Esophagus muscularis mucosa (tissue), 4 donors: ENCODE measurements at regions of chr19 and their contacts with region 1.

Region 1: DNA sequence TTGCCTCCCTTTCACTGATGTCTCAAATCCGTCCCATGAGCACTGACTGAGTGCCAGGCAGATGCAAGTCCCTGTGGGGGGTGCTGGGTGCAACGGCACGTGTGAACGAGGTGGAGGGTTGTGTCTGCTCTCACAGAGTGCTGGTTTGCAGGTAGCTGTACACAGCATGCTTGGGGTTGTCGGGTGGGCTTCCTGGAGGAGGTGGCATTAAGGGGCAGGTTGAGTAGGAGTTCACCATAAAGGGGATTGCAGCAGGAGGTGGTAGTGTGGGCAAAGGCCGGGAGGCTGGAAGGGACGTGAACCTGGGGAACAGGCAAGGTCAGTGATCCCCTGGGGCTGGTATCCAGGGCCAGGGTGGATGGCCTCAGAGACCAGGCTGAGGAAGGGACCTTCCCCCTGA is 17.2 kb downstream of the COLGALT1 start:
- DNase-seq: no peak
- H3K4me3 ChIP-seq: no peak overlapping the region
- H3K27ac ChIP-seq: no peak overlapping the region
- H3K4me1 ChIP-seq: peaks cover 0 to 11% (median 3%) of the 10 kb centered on the region in 4 donors
- H3K27me3 ChIP-seq: no peaks in the 10 kb centered on the region
- CTCF ChIP-seq: no peak
- EP300 ChIP-seq: no peak
- POLR2A ChIP-seq: no peak

Region 2: GRCh38 chr19:17539238-17540117 is 33.2 kb before region 1 on chr19:
- intact Hi-C with region 1: loop called (anchors 2 kb)
- DNase-seq: peak; percentile 99
- H3K4me3 ChIP-seq: peak overlapping the region; percentile 57 to 65 (median 62)
- H3K27ac ChIP-seq: peak overlapping the region; percentile 64 to 79 (median 68)
- H3K4me1 ChIP-seq: peaks cover 9 to 19% (median 15%) of the 10 kb centered on the region in 4 donors
- H3K27me3 ChIP-seq: no peaks in the 10 kb centered on the region
- CTCF ChIP-seq: peak; percentile 39 to 54 (median 53)
- EP300 ChIP-seq: no peak
- POLR2A ChIP-seq: no peak